Lower lobe of right lung (tissue), 2 donors: ENCODE measurements at regions of chr2 and their contacts with region 1.

Region 1: GRCh38 chr2:198127627-198128026 is 323.2 kb downstream of the PLCL1 start:
- DNase-seq: no peak
- ATAC-seq: peak; percentile 67 to 82
- H3K4me3 ChIP-seq: no peak overlapping the region
- H3K27ac ChIP-seq: no peak overlapping the region
- H3K4me1 ChIP-seq: no peaks in the 10 kb centered on the region
- H3K27me3 ChIP-seq: no peaks in the 10 kb centered on the region
- CTCF ChIP-seq: peak; percentile 65

Region 2: GRCh38 chr2:197813093-197813787 is 314.4 kb before region 1 on chr2:
- intact Hi-C with region 1: loop called (anchors 10 kb)
- DNase-seq: no peak
- ATAC-seq: peak; percentile 51 to 77
- H3K4me3 ChIP-seq: no peak overlapping the region
- H3K27ac ChIP-seq: no peak overlapping the region
- H3K4me1 ChIP-seq: no peaks in the 10 kb centered on the region
- H3K27me3 ChIP-seq: no peaks in the 10 kb centered on the region
- CTCF ChIP-seq: peak; percentile 56

Region 3: DNA sequence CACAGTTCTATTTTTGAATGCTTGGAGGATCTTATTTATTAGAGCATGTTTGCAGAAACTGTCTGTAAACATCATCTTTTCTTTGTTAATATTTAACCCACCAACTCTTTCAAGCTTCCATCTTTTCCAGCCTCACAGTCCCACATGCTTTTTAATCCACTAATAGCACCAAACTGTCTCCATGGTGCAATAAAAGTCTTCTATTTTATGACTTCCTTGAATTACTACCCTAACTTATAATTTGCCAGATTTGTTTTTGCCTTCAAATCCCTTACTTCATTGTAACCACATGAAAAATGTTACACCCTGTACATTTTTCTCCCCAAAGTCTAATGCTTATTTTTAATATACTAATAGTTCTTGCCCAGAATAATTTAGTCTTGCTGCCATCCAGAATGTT is 469.4 kb after region 1 on chr2:
- intact Hi-C with region 1: no loop called
- DNase-seq: no peak
- ATAC-seq: no peak
- H3K4me3 ChIP-seq: no peak overlapping the region
- H3K27ac ChIP-seq: no peak overlapping the region
- H3K4me1 ChIP-seq: no peaks in the 10 kb centered on the region
- H3K27me3 ChIP-seq: no peaks in the 10 kb centered on the region
- CTCF ChIP-seq: no peak